ENCODE measurements at regions of chr21 and their contacts with region 1.

Region 1: DNA sequence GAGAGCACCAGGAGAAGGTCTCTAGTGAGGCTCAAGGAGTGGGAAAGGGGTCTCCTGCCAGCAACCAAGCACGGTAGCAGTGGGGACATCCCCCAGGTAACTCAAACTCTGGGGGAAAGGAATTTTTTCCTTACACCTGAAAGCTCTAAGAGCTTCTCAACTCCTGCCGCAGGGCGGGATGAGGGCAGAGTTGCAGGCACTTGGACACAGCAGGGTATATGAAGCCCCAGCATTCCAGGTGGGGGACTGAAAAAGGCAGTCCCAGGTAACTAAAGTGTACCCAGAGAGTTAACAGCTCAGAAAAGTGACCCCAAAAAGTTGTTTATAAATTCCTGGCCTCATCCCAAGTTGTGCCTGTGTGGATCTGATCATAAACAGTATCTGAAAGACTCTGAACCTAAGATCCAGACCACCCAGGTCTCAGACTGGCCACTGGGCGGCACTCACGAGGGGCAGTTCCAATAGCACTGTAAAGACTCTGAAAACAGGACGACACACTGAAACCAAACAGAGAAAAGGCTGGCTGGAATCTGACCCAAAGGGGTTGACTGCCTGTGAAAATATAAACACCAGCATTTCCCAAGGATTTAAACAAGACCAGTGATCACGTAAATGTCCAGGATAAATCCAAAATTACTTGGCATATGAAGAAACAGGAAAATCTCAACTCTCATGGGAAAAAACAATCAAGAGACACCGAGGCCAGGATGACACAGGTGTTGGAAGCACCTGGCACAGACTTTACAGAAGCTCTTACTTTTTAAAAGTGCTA is 47.5 kb downstream of the HSF2BP start:
- DNase-seq: peak; percentile 66
- CTCF ChIP-seq: peak; percentile 83

Region 2: DNA sequence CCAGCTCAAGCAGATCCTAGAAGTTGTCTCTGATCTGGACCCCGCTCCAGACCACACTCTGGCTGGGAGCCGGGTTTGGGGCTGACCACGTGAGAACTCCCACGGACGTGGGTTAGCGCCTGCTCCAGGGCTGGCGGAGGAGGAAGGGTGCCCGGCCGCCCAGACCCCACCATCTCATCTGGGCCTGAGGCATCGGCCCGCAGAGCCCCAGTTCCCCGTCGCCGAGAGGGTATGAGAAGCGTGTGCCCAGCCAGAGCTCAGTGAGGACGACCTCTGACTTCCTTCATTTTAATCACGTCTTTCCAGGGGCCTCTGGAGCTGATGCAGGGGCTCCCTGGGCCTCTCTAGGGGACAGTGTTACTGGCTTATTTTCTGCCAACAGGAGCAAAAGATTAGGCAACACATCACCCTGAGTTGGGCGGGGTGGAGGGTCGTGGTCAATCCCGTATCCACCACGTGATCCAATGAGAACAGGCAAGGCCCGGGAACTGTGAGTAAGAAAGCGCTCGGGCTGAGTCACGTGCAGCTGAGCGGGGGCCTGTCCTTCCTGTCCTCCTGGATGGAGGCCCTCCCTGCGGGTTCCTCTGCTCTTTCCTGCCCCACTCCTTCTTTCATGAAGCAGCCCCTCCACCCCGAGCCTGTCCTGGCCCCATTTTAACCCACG is 265.9 kb before region 1 on chr21:
- CTCF ChIA-PET with region 1: no interaction called
- POLR2A ChIA-PET with region 1: no interaction called
- DNase-seq: no peak
- CTCF ChIP-seq: no peak

Region 3: GRCh38 chr21:43600642-43601402 is 11.0 kb before region 1 on chr21:
- CTCF ChIA-PET with region 1: interaction called, 14 read pairs
- POLR2A ChIA-PET with region 1: no interaction called
- DNase-seq: no peak
- CTCF ChIP-seq: no peak

Region 4: DNA sequence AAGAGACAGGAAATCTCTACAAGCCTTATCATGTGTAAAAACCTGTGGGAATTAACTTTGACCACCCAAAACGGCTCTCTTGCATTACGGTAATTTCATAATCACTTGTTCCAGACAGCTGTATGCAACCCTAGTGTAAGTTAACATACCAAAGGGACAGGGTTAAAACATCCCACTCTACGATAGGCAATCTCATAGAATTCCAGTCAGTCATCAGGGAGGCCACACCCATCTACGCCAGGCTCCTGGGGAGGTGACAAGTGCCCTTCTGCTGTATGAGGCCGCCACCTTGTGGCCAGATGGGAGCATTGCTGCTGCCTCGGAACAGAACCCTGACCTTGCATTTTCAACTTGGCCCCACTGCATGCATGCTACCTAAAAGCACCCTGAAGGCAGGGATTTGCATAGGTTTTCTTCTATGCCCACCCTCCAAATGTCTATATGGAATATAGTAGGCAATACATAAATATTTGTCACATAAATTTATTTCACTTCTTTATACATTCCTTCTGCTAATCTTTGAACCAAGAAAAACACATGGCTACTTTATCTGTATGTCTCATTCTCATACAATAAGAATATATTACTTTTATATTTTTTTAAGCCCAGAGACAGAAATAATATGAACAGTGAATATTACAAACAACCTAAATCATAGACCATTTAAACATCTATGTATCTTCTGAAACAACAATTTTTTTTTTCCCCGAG is 34.9 kb after region 1 on chr21:
- CTCF ChIA-PET with region 1: interaction called, 22 read pairs
- POLR2A ChIA-PET with region 1: no interaction called
- DNase-seq: peak; percentile 86
- CTCF ChIP-seq: peak; percentile 99